B cell (primary cell): ENCODE measurements at regions of chr12 and their contacts with region 1.

Region 1: GRCh38 chr12:12032851-12033588 is 37.7 kb upstream of the BCL2L14 start:
- DNase-seq: peak; percentile 78
- ATAC-seq: peak; percentile 70
- H3K4me3 ChIP-seq: peak overlapping the region; percentile 21 to 76 (median 48)
- H3K4me3 Mint-ChIP-seq: peak overlapping the region; percentile 75
- H3K27ac ChIP-seq: no peak overlapping the region
- H3K27ac Mint-ChIP-seq: no peak overlapping the region
- H3K4me1 ChIP-seq: peaks cover 12 to 15% of the 10 kb centered on the region in 2 donors
- H3K4me1 Mint-ChIP-seq: peaks cover 13% of the 10 kb centered on the region
- H3K27me3 ChIP-seq: no peaks in the 10 kb centered on the region
- H3K27me3 Mint-ChIP-seq: peaks cover 4% of the 10 kb centered on the region
- CTCF ChIP-seq: peak; percentile 87

Region 2: GRCh38 chr12:11553871-11554533 is 479.0 kb before region 1 on chr12:
- CTCF ChIA-PET with region 1: interaction called, 26 read pairs
- POLR2A ChIA-PET with region 1: no interaction called
- intact Hi-C with region 1: loop called (anchors 1 kb)
- DNase-seq: peak; percentile 70
- ATAC-seq: peak; percentile 63
- H3K4me3 ChIP-seq: no peak overlapping the region
- H3K4me3 Mint-ChIP-seq: no peak overlapping the region
- H3K27ac ChIP-seq: no peak overlapping the region
- H3K27ac Mint-ChIP-seq: no peak overlapping the region
- H3K4me1 ChIP-seq: peaks cover 0 to 3% of the 10 kb centered on the region in 2 donors
- H3K4me1 Mint-ChIP-seq: peaks cover 5% of the 10 kb centered on the region
- H3K27me3 ChIP-seq: no peaks in the 10 kb centered on the region
- H3K27me3 Mint-ChIP-seq: peaks cover 16% of the 10 kb centered on the region
- CTCF ChIP-seq: peak; percentile 75

Region 3: GRCh38 chr12:11615481-11615880 is 417.5 kb before region 1 on chr12:
- CTCF ChIA-PET with region 1: interaction called, 51 read pairs
- POLR2A ChIA-PET with region 1: no interaction called
- intact Hi-C with region 1: no loop called
- DNase-seq: no peak
- ATAC-seq: no peak
- H3K4me3 ChIP-seq: no peak overlapping the region
- H3K4me3 Mint-ChIP-seq: no peak overlapping the region
- H3K27ac ChIP-seq: no peak overlapping the region
- H3K27ac Mint-ChIP-seq: no peak overlapping the region
- H3K4me1 ChIP-seq: no peaks in the 10 kb centered on the region
- H3K4me1 Mint-ChIP-seq: no peaks in the 10 kb centered on the region
- H3K27me3 ChIP-seq: no peaks in the 10 kb centered on the region
- H3K27me3 Mint-ChIP-seq: no peaks in the 10 kb centered on the region
- CTCF ChIP-seq: no peak

Region 4: DNA sequence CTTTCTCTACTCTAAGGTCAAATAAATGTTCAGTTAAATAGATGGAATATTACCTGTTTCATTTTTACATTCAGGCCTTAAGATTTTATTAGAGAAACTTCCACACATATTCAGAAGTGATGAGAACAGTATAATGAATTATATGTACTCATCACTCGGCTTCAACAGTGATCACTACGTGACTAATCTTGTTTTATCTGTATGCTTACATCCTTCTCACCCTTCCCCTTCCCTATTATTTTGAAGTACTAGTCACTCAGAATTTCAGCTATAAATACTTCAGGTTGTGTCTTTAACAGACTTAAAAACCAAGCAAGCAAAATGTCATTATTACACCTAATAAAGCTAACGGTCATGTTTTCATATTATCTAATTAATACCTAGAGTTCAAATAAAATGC is 348.6 kb before region 1 on chr12:
- CTCF ChIA-PET with region 1: interaction called, 14 read pairs
- POLR2A ChIA-PET with region 1: no interaction called
- intact Hi-C with region 1: no loop called
- DNase-seq: no peak
- ATAC-seq: no peak
- H3K4me3 ChIP-seq: no peak overlapping the region
- H3K4me3 Mint-ChIP-seq: no peak overlapping the region
- H3K27ac ChIP-seq: no peak overlapping the region
- H3K27ac Mint-ChIP-seq: no peak overlapping the region
- H3K4me1 ChIP-seq: peaks cover 6 to 8% of the 10 kb centered on the region in 2 donors
- H3K4me1 Mint-ChIP-seq: peaks cover 63% of the 10 kb centered on the region
- H3K27me3 ChIP-seq: no peaks in the 10 kb centered on the region
- H3K27me3 Mint-ChIP-seq: no peaks in the 10 kb centered on the region
- CTCF ChIP-seq: no peak

Region 5: GRCh38 chr12:11812586-11813427 is 220.2 kb before region 1 on chr12:
- CTCF ChIA-PET with region 1: interaction called, 18 read pairs
- POLR2A ChIA-PET with region 1: no interaction called
- intact Hi-C with region 1: no loop called
- DNase-seq: peak; percentile 70
- ATAC-seq: peak; percentile 82
- H3K4me3 ChIP-seq: peak overlapping the region; percentile 35 to 64 (median 52)
- H3K4me3 Mint-ChIP-seq: peak overlapping the region; percentile 35
- H3K27ac ChIP-seq: peak overlapping the region; percentile 54 to 80
- H3K27ac Mint-ChIP-seq: peak overlapping the region; percentile 78
- H3K4me1 ChIP-seq: peaks cover 34 to 37% of the 10 kb centered on the region in 2 donors
- H3K4me1 Mint-ChIP-seq: peaks cover 53% of the 10 kb centered on the region
- H3K27me3 ChIP-seq: no peaks in the 10 kb centered on the region
- H3K27me3 Mint-ChIP-seq: no peaks in the 10 kb centered on the region
- CTCF ChIP-seq: peak; percentile 36

Region 6: DNA sequence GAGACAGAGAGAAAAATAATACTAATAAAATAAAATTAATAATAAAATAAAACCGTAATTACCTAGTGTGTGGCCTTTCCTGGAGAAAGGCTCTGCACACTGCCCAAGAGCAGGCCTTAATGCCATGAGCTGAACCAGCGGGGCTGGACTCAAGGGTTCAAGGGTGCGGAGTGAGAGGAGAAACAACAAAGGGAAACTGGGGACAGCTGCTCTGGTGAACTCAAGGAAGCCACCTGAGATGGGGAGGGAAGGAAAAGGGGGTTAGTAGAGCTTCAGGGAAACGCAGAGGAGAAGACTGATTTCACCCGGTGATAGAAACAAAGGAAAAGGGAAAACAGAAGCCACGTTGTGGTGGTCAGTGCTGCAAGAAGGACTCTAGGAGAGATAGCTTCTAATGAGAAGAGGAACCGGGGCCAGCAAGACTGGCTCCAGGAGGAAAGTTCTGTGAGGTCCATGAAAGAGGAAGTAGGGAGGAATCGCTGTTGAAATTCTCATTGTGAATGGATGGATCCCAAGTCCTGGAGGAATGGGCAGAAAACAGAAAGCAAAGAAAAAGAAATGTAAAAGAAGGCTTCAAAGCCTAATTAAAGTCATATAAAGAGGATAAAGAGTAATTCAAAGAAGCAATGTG is 10.6 kb before region 1 on chr12:
- CTCF ChIA-PET with region 1: interaction called, 12 read pairs
- POLR2A ChIA-PET with region 1: no interaction called
- intact Hi-C with region 1: no loop called
- DNase-seq: no peak
- ATAC-seq: no peak
- H3K4me3 ChIP-seq: no peak overlapping the region
- H3K4me3 Mint-ChIP-seq: no peak overlapping the region
- H3K27ac ChIP-seq: no peak overlapping the region
- H3K27ac Mint-ChIP-seq: no peak overlapping the region
- H3K4me1 ChIP-seq: peaks cover 33 to 36% of the 10 kb centered on the region in 2 donors
- H3K4me1 Mint-ChIP-seq: peaks cover 41% of the 10 kb centered on the region
- H3K27me3 ChIP-seq: no peaks in the 10 kb centered on the region
- H3K27me3 Mint-ChIP-seq: no peaks in the 10 kb centered on the region
- CTCF ChIP-seq: no peak

Region 7: DNA sequence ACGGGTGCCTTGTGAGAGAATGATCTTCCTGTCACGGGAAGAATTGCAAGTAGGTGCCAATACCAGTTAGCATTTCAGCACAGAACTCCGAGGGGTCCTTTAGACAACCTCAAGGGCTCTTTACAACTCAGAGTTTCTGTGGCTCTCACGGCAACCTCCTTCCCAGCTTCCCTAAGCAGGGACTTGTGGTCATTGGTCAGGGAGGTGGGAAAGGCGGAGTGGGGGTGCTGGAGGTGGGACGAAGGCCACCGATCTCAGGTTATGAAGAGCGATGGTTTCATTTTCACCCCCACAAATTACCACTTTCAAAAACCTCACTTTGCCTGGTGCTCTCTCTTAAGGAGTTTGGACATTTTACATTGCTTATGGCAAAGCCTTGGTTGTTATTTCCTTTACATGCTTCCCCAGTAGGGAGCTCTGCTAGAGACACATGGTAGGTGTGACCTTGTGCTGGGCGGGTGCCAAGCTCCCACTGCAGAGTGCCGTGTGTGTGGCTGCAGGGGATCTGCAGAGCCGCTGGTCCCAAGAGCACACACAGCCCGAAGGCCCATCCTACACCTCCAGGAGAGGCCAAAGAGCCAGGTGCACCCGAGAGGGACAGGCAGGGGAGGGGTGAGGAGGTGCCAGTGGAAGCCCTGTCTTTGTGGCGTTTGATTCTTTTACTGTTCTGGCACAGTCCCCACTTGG is 59.1 kb after region 1 on chr12:
- CTCF ChIA-PET with region 1: no interaction called
- POLR2A ChIA-PET with region 1: no interaction called
- intact Hi-C with region 1: no loop called
- DNase-seq: no peak
- ATAC-seq: no peak
- H3K4me3 ChIP-seq: no peak overlapping the region
- H3K4me3 Mint-ChIP-seq: no peak overlapping the region
- H3K27ac ChIP-seq: no peak overlapping the region
- H3K27ac Mint-ChIP-seq: no peak overlapping the region
- H3K4me1 ChIP-seq: no peaks in the 10 kb centered on the region
- H3K4me1 Mint-ChIP-seq: no peaks in the 10 kb centered on the region
- H3K27me3 ChIP-seq: peaks cover 0 to 8% (median 0%) of the 10 kb centered on the region in 4 experiments
- H3K27me3 Mint-ChIP-seq: peaks cover 36% of the 10 kb centered on the region
- CTCF ChIP-seq: no peak